ENCODE measurements at regions of chr1 and their contacts with region 1.

Region 1: DNA sequence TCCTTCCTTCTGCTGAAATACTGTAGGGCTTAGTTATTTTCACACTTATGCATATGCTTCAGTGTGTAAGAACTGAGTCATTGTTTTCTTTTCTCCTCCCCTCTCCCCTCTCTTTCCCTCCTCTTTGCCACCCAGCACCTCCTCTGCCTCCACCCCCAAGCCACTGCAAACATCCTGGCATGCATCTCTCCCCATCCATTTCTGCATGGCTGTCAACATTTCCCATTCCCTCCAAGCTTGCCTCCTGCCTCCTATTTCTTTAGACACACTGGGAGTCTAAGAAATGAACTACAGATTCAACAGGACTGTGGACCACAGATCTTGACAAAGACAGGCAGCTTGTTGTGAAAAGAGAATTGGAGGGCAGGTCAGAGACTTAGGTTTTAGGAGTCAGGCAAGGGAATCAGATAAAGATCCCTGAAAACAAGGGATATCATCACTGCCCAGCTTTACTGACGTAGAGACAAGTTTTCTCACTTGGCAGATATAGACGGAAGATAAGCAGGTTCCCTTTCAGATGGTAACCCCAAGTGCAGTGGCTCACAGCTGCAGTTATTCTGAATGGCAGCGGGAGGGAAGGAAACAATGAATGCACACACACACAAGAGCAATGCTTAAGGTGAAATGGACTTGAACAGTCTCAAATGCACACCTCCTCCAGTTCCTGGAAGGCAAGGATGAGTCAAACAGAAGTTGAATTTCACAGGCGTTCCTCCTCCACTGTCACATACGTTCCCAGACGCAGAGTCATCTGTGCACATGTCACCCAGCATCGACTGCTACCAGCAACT is 56.1 kb downstream of the HIVEP3 start:
- DNase-seq: peak; percentile 64
- H3K4me3 Mint-ChIP-seq: no peak overlapping the region
- H3K27ac Mint-ChIP-seq: peak overlapping the region; percentile 71
- H3K4me1 Mint-ChIP-seq: peaks cover 33% of the 10 kb centered on the region
- H3K27me3 Mint-ChIP-seq: no peaks in the 10 kb centered on the region

Region 2: GRCh38 chr1:41573785-41574713 is 288.5 kb before region 1 on chr1:
- CTCF ChIA-PET with region 1: interaction called, 13 read pairs
- POLR2A ChIA-PET with region 1: no interaction called
- DNase-seq: peak; percentile 88
- H3K4me3 Mint-ChIP-seq: no peak overlapping the region
- H3K27ac Mint-ChIP-seq: peak overlapping the region; percentile 12
- H3K4me1 Mint-ChIP-seq: peaks cover 24% of the 10 kb centered on the region
- H3K27me3 Mint-ChIP-seq: no peaks in the 10 kb centered on the region

Region 3: GRCh38 chr1:41876576-41877445 is 14.2 kb after region 1 on chr1:
- CTCF ChIA-PET with region 1: no interaction called
- POLR2A ChIA-PET with region 1: no interaction called
- DNase-seq: no peak
- H3K4me3 Mint-ChIP-seq: no peak overlapping the region
- H3K27ac Mint-ChIP-seq: no peak overlapping the region
- H3K4me1 Mint-ChIP-seq: peaks cover 20% of the 10 kb centered on the region
- H3K27me3 Mint-ChIP-seq: no peaks in the 10 kb centered on the region

Region 4: DNA sequence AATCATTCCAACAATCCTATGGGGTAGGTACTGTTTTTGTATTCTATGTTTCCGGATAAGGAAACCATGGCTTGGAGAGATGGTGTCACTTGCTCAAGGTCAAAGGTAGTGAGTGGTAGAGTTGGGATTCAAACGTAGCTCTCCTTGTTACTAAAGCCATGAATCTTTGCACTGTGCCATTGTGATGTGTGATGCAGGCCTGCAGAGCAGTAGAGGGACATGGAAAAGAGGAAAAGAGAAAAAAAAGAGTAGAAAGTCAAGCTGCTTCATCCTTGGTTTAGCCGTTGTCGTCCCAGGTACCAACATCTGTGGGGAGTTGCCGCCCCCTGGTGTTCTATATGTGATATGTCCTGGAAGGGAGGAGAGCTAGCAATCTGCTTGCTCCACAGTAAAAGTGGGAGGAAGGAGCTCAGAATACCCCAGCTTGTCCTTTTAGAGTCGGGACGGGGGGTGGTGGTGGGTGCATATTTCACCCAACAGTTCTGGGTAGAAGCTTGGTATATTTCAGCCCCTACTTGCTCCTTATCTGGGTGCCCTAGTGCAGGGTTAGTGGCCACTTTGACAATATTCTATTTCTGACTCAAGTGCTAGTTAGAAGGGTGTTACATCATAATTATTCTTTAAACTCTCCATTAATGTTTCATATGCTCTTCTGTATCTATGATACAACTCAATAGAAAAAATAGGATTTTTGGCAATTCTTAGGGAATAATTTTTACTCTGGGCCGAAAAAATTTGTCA is 1211.1 kb after region 1 on chr1:
- CTCF ChIA-PET with region 1: no interaction called
- POLR2A ChIA-PET with region 1: no interaction called
- DNase-seq: peak; percentile 80
- H3K4me3 Mint-ChIP-seq: no peak overlapping the region
- H3K27ac Mint-ChIP-seq: no peak overlapping the region
- H3K4me1 Mint-ChIP-seq: peaks cover 6% of the 10 kb centered on the region
- H3K27me3 Mint-ChIP-seq: no peaks in the 10 kb centered on the region

Measured in activated CD4-positive, alpha-beta memory T cell treated with anti-CD3 and anti-CD28 coated beads, Interleukin-2, amount 10 ng/mL, durations not matched to agents 7 days and 5 days (primary cell).